H1 (cell line): ENCODE measurements at regions of chr11 and their contacts with region 1.

Region 1: GRCh38 chr11:14308114-14308896 is 50.7 kb downstream of the RRAS2 start:
- DNase-seq: no peak
- H3K4me3 ChIP-seq: no peak overlapping the region
- H3K27ac ChIP-seq: no peak overlapping the region
- H3K4me1 ChIP-seq: peaks cover 0 to 24% (median 7%) of the 10 kb centered on the region in 4 experiments; a peak in 6 of 7 replicates
- H3K27me3 ChIP-seq: no peaks in the 10 kb centered on the region
- CTCF ChIP-seq: peak in 2 of 3 experiments; percentile 29 to 69; a peak in 2 of 4 replicates
- EP300 ChIP-seq: no peak
- POLR2A ChIP-seq: no peak
- RAD21 ChIP-seq: peak in 1 of 2 experiments; percentile 36; a peak in 2 of 4 replicates

Region 2: DNA sequence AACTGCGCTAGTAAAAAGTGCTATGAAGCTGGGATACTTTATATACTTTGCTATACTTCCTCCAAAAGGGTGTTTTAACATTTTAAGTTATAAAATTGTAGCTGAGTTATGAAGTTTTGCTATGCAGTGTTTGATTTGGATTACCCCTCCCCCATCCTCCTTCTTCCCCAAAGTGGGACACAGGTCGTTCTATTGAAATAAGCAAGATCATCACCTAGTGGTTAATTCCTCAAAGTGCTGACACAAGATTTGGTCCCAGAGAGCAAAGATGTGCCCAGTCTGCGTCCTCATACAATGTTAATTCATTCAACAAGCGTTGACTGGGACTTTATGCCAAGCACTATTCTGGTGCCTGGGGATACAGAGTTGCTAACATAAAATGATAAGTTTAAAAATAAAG is 267.3 kb before region 1 on chr11:
- CTCF ChIA-PET with region 1: no interaction called
- POLR2A ChIA-PET with region 1: no interaction called
- DNase-seq: no peak
- H3K4me3 ChIP-seq: no peak overlapping the region
- H3K27ac ChIP-seq: no peak overlapping the region
- H3K4me1 ChIP-seq: no peaks in the 10 kb centered on the region; a peak in 1 of 7 replicates
- H3K27me3 ChIP-seq: no peaks in the 10 kb centered on the region
- CTCF ChIP-seq: peak in 2 of 3 experiments; percentile 55 to 71; a peak in 3 of 4 replicates
- EP300 ChIP-seq: no peak
- POLR2A ChIP-seq: no peak
- RAD21 ChIP-seq: peak; percentile 78 to 80

Region 3: DNA sequence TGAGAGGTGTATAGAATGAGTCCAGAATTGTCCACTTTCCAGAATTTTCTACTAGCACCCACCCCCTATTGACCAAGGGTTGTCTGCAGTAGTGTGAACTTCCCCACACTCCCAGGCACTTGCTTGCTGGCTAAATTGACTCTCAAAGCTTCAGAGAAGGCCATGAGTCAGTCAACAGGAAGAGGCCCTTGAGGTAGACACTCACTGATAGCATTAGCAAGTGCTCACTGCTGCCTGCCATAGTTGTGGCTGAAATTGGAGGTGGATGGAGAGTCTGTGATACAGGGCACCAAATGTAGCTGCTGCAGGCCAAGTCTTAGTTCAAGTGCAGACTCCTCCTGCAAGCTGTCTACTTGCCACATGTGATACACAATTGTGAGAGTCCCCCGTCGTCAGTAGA is 188.9 kb before region 1 on chr11:
- CTCF ChIA-PET with region 1: no interaction called
- POLR2A ChIA-PET with region 1: no interaction called
- DNase-seq: no peak
- H3K4me3 ChIP-seq: no peak overlapping the region
- H3K27ac ChIP-seq: no peak overlapping the region
- H3K4me1 ChIP-seq: no peaks in the 10 kb centered on the region
- H3K27me3 ChIP-seq: no peaks in the 10 kb centered on the region
- CTCF ChIP-seq: no peak
- EP300 ChIP-seq: no peak
- POLR2A ChIP-seq: no peak
- RAD21 ChIP-seq: no peak

Region 4: GRCh38 chr11:14258221-14258935 is 49.9 kb before region 1 on chr11:
- CTCF ChIA-PET with region 1: no interaction called
- POLR2A ChIA-PET with region 1: no interaction called
- DNase-seq: peak in 1 of 2 experiments; percentile 40
- H3K4me3 ChIP-seq: no peak overlapping the region
- H3K27ac ChIP-seq: no peak overlapping the region
- H3K4me1 ChIP-seq: no peaks in the 10 kb centered on the region; a peak in 1 of 7 replicates
- H3K27me3 ChIP-seq: no peaks in the 10 kb centered on the region
- CTCF ChIP-seq: no peak
- EP300 ChIP-seq: no peak
- POLR2A ChIP-seq: no peak
- RAD21 ChIP-seq: no peak

Region 5: DNA sequence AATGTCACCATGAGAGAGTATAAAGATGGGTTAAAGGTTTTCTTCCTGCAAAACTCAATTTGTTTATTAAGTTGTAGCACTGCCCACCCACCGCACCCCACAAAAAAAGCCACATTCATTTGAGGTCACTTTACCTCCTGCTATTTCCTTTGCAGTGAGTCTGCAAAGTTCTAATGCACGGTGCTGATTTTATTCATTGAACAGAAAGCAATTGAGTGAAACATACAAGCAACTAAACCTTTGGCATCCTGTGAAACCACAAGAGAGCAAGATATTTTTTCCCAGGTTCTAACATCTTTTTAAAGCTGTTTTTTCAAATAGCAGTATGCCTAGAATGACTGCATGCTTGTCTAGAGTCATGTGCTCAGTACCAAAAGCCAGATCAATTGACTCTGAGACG is 11.7 kb after region 1 on chr11:
- CTCF ChIA-PET with region 1: interaction called, 20 read pairs
- POLR2A ChIA-PET with region 1: interaction called, 8 read pairs
- DNase-seq: no peak
- H3K4me3 ChIP-seq: no peak overlapping the region
- H3K27ac ChIP-seq: no peak overlapping the region; the same call in 1 of the 2 replicates
- H3K4me1 ChIP-seq: peaks cover 6 to 13% (median 7%) of the 10 kb centered on the region in 4 experiments; a peak in 5 of 7 replicates
- H3K27me3 ChIP-seq: no peaks in the 10 kb centered on the region
- CTCF ChIP-seq: no peak
- EP300 ChIP-seq: no peak
- POLR2A ChIP-seq: no peak
- RAD21 ChIP-seq: no peak

Region 6: GRCh38 chr11:14330881-14331280 is 22.6 kb after region 1 on chr11:
- CTCF ChIA-PET with region 1: interaction called, 27 read pairs
- POLR2A ChIA-PET with region 1: interaction called, 3 read pairs
- DNase-seq: no peak
- H3K4me3 ChIP-seq: no peak overlapping the region
- H3K27ac ChIP-seq: no peak overlapping the region
- H3K4me1 ChIP-seq: peaks cover 4 to 26% (median 9%) of the 10 kb centered on the region in 4 experiments; a peak in 6 of 7 replicates
- H3K27me3 ChIP-seq: no peaks in the 10 kb centered on the region
- CTCF ChIP-seq: no peak
- EP300 ChIP-seq: no peak
- POLR2A ChIP-seq: no peak
- RAD21 ChIP-seq: no peak

Region 7: GRCh38 chr11:14336507-14337503 is 28.5 kb after region 1 on chr11:
- CTCF ChIA-PET with region 1: interaction called, 49 read pairs
- POLR2A ChIA-PET with region 1: interaction called, 9 read pairs
- DNase-seq: no peak
- H3K4me3 ChIP-seq: peak overlapping the region in 1 of 4 experiments; percentile 13; a peak in 1 of 8 replicates
- H3K27ac ChIP-seq: no peak overlapping the region
- H3K4me1 ChIP-seq: peaks cover 5 to 32% (median 16%) of the 10 kb centered on the region in 4 experiments; a peak in 6 of 7 replicates
- H3K27me3 ChIP-seq: no peaks in the 10 kb centered on the region
- CTCF ChIP-seq: no peak
- EP300 ChIP-seq: no peak
- POLR2A ChIP-seq: no peak
- RAD21 ChIP-seq: no peak

Region 8: DNA sequence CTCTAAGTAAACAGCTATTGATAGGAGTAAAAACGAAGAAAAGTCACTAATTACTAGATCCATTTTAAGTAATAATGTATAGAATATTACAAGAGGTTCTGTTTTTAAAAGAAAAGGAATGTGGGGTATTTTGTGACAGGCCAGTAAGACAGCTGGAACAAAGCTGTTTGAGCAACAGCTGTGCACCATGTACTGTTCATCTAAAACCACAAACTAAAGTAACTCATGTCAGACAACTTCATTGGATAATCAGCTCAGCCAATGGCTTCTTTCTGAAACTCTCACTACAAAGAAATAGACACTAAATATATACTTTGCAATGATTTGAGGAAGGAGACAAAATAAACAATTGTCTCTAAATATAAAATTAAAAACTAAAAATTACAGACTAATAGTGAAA is 34.6 kb after region 1 on chr11:
- CTCF ChIA-PET with region 1: interaction called, 49 read pairs
- POLR2A ChIA-PET with region 1: interaction called, 9 read pairs
- DNase-seq: no peak
- H3K4me3 ChIP-seq: peak overlapping the region in 1 of 4 experiments; percentile 64; a peak in 1 of 8 replicates
- H3K27ac ChIP-seq: no peak overlapping the region
- H3K4me1 ChIP-seq: peaks cover 0 to 29% (median 7%) of the 10 kb centered on the region in 4 experiments; a peak in 5 of 7 replicates
- H3K27me3 ChIP-seq: no peaks in the 10 kb centered on the region
- CTCF ChIP-seq: no peak
- EP300 ChIP-seq: no peak
- POLR2A ChIP-seq: no peak
- RAD21 ChIP-seq: no peak

Region 9: GRCh38 chr11:14358729-14359439 is 50.6 kb after region 1 on chr11 and contains the start of gene RRAS2:
- CTCF ChIA-PET with region 1: interaction called, 12 read pairs
- POLR2A ChIA-PET with region 1: interaction called, 12 read pairs
- DNase-seq: peak in 1 of 2 experiments; percentile 84
- H3K4me3 ChIP-seq: peak within 1 kb of the TSS; percentile 85 to 99 (median 94)
- H3K27ac ChIP-seq: peak within 1 kb of the TSS; percentile 78; the same call in 1 of the 2 replicates
- H3K4me1 ChIP-seq: peaks cover 0 to 7% (median 4%) of the 10 kb centered on the region in 4 experiments; a peak in 6 of 7 replicates
- H3K27me3 ChIP-seq: no peaks in the 10 kb centered on the region
- CTCF ChIP-seq: no peak
- EP300 ChIP-seq: no peak
- POLR2A ChIP-seq: peak; percentile 74 to 81; a peak in 2 of 3 replicates
- RAD21 ChIP-seq: no peak
- total RNA-seq, gene RRAS2: 220 and 234 TPM in 2 replicates

Region 10: DNA sequence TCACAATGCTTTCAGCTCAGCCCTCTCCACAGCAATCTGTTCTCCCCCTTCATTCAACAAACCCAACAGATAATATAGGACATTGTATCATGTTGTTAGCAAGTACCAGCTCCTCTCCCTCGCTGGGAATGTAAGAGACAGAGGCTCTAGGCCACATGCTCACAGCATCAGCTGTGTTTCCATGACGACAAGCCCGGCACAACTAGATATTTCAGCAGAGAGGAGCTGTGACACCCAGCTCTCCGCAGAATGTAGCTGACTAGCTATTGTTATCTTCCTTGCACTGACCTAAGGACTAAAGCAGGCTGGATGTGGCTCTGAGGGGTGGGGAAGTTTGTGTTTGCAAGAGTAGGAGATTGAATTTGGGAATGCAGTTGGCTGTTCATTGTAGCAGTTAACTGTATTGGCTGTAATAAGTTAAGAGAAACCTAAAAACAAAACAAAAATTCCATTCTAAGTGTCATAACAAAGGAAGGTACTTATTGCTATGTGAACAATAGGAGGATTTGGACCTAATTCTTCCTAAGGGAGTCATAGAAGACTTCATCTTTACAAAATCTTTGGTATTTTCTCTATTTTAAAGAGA is 78.7 kb after region 1 on chr11:
- CTCF ChIA-PET with region 1: interaction called, 20 read pairs
- POLR2A ChIA-PET with region 1: no interaction called
- DNase-seq: peak; percentile 15 to 66
- H3K4me3 ChIP-seq: no peak overlapping the region
- H3K27ac ChIP-seq: no peak overlapping the region
- H3K4me1 ChIP-seq: peaks cover 0 to 9% (median 3%) of the 10 kb centered on the region in 4 experiments; a peak in 2 of 7 replicates
- H3K27me3 ChIP-seq: peaks cover 0 to 4% (median 1%) of the 10 kb centered on the region in 4 experiments; a peak in 4 of 7 replicates
- CTCF ChIP-seq: no peak
- EP300 ChIP-seq: no peak
- POLR2A ChIP-seq: no peak
- RAD21 ChIP-seq: no peak